Heart left ventricle (tissue), 16 donors: ENCODE measurements at regions of chr2 and their contacts with region 1.

Region 1: DNA sequence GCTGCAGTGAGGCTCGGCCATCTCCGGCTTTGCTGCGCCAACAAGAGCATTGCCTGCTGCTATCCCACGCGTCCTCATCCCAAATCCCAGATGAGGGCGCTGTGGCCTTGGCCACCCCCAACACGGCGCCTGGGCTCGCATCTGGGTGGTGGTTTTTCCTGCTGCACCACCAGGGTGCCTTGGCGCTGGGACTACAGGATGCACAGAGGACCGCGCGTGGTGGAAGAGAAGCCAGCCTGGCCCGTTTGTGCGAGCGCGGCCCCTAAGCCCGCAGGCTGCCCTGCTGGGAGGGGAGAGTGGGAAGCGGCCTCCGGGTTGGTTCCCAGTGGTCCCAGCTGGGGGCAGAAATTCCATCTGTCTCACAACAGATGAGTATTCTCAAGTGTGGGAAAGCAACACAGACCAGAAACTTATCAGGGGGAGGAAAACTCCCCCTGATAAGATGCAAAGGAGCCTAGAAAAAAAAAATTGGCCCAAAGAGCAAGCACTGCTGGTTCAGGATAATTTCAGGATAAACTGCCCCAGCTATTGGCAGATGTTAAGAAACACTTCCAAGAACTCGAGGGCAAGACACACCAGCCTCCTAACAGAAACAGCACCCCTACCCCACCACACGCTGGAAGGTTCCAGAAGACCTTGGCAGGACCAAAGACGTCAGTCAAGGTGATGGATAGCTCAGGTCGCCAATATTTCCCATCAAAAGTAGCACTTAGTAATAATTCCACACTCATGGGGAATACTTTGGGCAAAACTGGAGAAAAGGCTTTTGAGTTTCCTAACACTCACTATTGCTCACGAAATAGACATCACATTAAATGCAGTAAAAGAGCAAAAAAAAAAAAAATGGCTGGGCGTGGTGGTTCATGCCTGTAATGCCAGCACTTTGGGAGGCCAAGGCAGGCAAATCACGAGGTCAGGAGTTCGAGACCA is 152.1 kb downstream of the PXDN start:
- DNase-seq: peak; percentile 70 to 86 (median 83)
- ATAC-seq: peak; percentile 57 to 87 (median 81)
- H3K4me3 ChIP-seq: peak overlapping the region in 10 of 12 donors; percentile 4 to 40 (median 25)
- H3K27ac ChIP-seq: peak overlapping the region; percentile 24 to 77 (median 60)
- H3K4me1 ChIP-seq: peaks cover 0 to 43% (median 26%) of the 10 kb centered on the region in 12 donors
- H3K27me3 ChIP-seq: peaks cover 0 to 8% (median 0%) of the 10 kb centered on the region in 9 donors
- CTCF ChIP-seq: peak; percentile 42 to 78 (median 67)
- POLR2A ChIP-seq: peak in 1 of 2 donors; percentile 6

Region 2: GRCh38 chr2:1645761-1646476 is 53.7 kb after region 1 on chr2:
- intact Hi-C with region 1: loop called in 3 of 10 experiments (anchors 5 kb)
- DNase-seq: peak in 1 of 5 donors; percentile 26
- ATAC-seq: peak in 1 of 4 donors; percentile 52
- H3K4me3 ChIP-seq: no peak overlapping the region
- H3K27ac ChIP-seq: peak overlapping the region in 4 of 12 donors; percentile 15 to 48 (median 33)
- H3K4me1 ChIP-seq: peaks cover 0 to 52% (median 10%) of the 10 kb centered on the region in 12 donors
- H3K27me3 ChIP-seq: no peaks in the 10 kb centered on the region
- CTCF ChIP-seq: no peak
- POLR2A ChIP-seq: no peak

Region 3: DNA sequence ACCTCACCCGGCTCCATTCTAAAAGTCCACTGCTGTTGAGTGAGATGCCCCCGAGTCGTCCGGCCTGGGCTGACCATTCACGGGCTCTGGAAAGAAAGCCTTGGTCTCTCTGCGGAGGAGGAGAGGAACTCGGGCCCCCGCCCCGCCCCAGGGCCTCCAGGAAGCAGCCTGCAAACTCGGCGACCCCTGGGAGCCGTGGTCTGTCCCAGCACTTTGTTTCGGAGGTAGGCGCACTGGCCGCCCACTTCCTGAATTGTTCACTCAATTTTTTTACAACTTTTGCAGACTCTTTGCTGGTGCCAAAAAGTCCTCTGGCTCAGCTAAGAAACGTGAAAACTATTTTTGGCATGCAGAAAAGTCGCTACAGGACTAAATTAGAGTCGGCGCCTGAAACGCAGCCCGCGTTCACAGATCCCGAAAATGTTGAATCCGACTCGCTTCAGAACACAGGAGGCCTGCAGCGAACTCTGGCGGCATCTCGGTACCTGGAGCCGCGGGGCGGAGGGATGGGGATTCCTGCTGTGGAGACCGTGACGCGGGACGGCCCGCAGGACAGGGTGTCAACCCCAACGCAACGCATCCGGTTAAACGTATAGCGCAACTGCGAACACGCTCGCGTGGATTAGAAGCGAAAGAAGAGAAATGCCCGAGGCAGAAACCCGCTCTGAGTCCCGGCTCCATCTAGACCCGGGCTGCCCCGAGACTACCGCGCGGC is 150.6 kb after region 1 on chr2:
- intact Hi-C with region 1: loop called in 6 of 10 experiments (anchors 2 to 5 kb)
- DNase-seq: peak; percentile 79 to 84 (median 81)
- ATAC-seq: peak; percentile 34 to 70 (median 46)
- H3K4me3 ChIP-seq: peak overlapping the region; percentile 61 to 96 (median 78)
- H3K27ac ChIP-seq: peak overlapping the region; percentile 60 to 98 (median 92)
- H3K4me1 ChIP-seq: peaks cover 0 to 69% (median 36%) of the 10 kb centered on the region in 12 donors
- H3K27me3 ChIP-seq: peaks cover 0 to 19% (median 0%) of the 10 kb centered on the region in 9 donors
- CTCF ChIP-seq: peak; percentile 16 to 71 (median 54)
- POLR2A ChIP-seq: peak in 1 of 2 donors; percentile 16

Region 4: GRCh38 chr2:1817256-1818051 is 225.2 kb after region 1 on chr2:
- intact Hi-C with region 1: loop called in 3 of 10 experiments (anchors 5 to 10 kb)
- DNase-seq: peak; percentile 86 to 93 (median 89)
- ATAC-seq: peak; percentile 92 to 96 (median 94)
- H3K4me3 ChIP-seq: peak overlapping the region in 2 of 12 donors; percentile 3 to 24
- H3K27ac ChIP-seq: peak overlapping the region; percentile 31 to 95 (median 79)
- H3K4me1 ChIP-seq: peaks cover 0 to 25% (median 12%) of the 10 kb centered on the region in 12 donors
- H3K27me3 ChIP-seq: no peaks in the 10 kb centered on the region
- CTCF ChIP-seq: peak; percentile 90 to 99 (median 98)
- POLR2A ChIP-seq: no peak